OCI-LY7 (cell line): ENCODE measurements at regions of chr11 and their contacts with region 1.

Region 1: DNA sequence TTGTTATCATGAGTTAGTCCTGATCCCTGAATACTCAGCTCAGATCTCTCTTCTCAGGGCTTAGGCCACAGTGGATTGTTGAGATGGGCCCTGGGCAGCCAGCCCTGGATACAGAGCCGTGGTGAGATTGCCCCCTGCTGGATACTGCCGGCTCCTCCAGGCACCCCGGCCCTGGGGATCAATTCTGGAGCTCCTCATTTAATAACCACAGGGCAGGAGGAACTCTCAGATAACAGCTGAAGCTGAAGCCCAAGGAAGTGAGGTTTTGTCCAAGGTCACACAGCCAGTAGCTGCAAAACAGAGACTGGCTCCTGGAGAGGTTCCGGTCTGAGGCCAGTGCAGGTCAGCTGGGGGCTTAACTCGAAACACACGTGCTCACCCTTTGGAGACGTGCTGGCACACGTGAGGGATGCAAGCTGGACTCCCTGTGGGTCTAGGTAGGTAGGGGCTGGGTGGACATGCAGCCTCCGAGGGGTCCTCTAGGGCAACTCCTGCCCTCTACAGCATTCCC is 16.0 kb downstream of the USH1C start:
- DNase-seq: peak; percentile 51
- H3K4me3 ChIP-seq: no peak overlapping the region
- H3K27ac ChIP-seq: no peak overlapping the region
- H3K4me1 ChIP-seq: no peaks in the 10 kb centered on the region
- CTCF ChIP-seq: peak; percentile 89

Region 2: GRCh38 chr11:16945671-16946469 is 582.4 kb before region 1 on chr11:
- CTCF ChIA-PET with region 1: no interaction called
- POLR2A ChIA-PET with region 1: no interaction called
- intact Hi-C with region 1: loop called (anchors 10 kb)
- DNase-seq: peak; percentile 45
- H3K4me3 ChIP-seq: no peak overlapping the region
- H3K27ac ChIP-seq: no peak overlapping the region
- H3K4me1 ChIP-seq: peaks cover 9% of the 10 kb centered on the region
- CTCF ChIP-seq: peak; percentile 71

Region 3: GRCh38 chr11:17230867-17231851 is 297.1 kb before region 1 on chr11:
- CTCF ChIA-PET with region 1: no interaction called
- POLR2A ChIA-PET with region 1: no interaction called
- intact Hi-C with region 1: loop called (anchors 1 kb)
- DNase-seq: peak; percentile 27
- H3K4me3 ChIP-seq: no peak overlapping the region
- H3K27ac ChIP-seq: no peak overlapping the region
- H3K4me1 ChIP-seq: peaks cover 20% of the 10 kb centered on the region
- CTCF ChIP-seq: no peak

Region 4: DNA sequence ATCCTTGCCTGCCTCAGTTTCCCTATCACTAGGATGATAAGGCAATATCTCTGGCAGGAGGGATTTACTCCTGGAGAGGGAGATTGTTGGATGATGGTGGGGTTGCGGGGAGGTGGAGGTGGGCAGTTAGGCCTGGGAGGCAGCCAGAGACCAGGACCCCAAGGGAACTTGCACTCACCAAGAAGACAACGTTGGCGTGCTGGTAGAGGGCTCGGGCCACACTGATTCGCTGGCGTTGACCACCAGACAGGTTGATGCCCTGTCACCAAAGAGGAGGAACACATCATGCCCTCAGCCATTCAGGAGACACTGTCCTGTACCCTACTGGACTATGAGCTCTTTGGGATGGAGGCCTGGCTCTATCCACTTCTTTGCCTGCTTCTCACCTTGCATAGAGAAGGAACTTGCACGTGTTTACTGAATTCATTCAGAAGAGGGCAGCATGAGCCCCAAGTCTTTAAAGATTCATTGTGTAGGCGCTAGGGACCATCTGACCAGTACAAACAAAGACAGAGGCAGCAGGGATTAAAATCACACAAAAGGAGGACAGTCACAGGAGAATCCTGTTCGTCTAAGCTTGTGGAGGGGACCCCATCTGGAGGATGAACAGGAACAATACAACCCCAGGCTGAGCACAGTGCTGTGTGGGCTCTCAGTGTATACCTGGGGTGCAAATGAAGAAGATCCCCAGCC is 115.6 kb before region 1 on chr11:
- CTCF ChIA-PET with region 1: no interaction called
- POLR2A ChIA-PET with region 1: no interaction called
- intact Hi-C with region 1: no loop called
- DNase-seq: no peak
- H3K4me3 ChIP-seq: no peak overlapping the region
- H3K27ac ChIP-seq: no peak overlapping the region
- H3K4me1 ChIP-seq: no peaks in the 10 kb centered on the region
- CTCF ChIP-seq: no peak